ENCODE measurements at regions of chr20 and their contacts with region 1.

Region 1: DNA sequence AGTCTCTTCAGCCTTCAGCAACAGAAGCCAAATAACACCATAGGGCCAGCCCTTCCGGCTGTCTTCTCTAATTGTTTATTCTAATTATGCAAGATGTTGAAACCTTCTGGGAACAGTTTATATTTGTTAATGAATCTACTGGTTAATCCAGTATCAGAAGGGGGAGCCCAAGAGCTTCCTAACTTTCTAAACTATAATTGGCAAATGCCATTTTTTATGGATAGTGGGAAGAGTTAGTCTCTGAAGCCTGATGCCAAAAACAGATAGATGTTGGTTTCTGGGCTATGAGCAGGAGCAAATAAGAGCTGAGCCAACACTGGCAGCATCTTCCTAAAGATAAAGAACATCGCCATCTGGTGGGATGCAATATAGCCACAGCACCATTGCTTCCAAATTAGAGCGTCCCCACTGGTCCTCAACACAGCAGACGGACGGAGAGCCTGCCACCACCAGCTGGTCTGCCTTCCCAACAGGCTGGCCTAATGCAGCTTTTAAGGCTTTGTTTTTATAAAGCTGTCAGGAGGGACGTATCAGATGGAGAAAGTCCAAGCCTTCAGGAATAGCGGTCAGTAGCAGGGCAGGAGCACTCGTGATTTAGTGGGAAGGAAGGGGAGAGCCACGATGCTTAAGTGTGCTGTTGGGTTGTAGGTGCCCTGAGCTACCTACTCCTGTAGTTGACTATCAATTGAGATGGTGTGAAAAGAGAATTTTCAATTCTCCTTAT is 118.8 kb downstream of the RALGAPA2 start:
- DNase-seq: no peak
- H3K4me3 ChIP-seq: no peak overlapping the region
- CTCF ChIP-seq: peak; percentile 47

Region 2: GRCh38 chr20:20083807-20084206 is 509.8 kb before region 1 on chr20:
- CTCF ChIA-PET with region 1: interaction called, 67 read pairs
- POLR2A ChIA-PET with region 1: no interaction called
- DNase-seq: no peak
- H3K4me3 ChIP-seq: no peak overlapping the region
- CTCF ChIP-seq: no peak

Region 3: DNA sequence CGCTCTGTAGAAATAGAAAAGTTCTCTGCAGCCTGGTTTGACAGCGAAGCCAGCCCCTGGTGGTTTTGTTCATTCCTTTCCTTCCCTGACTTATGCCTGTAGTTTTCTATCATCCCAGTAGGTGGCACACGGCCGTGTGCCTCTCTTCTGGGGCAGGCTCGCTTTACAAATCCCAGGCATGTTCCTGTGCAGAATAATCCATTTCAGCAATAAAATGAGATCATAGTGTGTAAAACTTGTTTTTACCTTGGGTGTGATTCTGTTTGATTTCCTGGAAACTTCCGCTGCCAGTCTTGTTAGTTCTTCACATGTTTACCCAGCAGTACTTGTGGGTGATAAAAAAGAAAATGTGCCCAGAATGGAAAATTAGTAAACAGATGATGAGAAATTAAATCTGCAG is 233.1 kb before region 1 on chr20:
- CTCF ChIA-PET with region 1: interaction called, 28 read pairs
- POLR2A ChIA-PET with region 1: no interaction called
- DNase-seq: peak; percentile 17
- H3K4me3 ChIP-seq: no peak overlapping the region
- CTCF ChIP-seq: peak; percentile 76

Region 4: GRCh38 chr20:20568604-20569205 is 24.9 kb before region 1 on chr20:
- CTCF ChIA-PET with region 1: interaction called, 16 read pairs
- POLR2A ChIA-PET with region 1: no interaction called
- DNase-seq: peak; percentile 7
- H3K4me3 ChIP-seq: no peak overlapping the region
- CTCF ChIP-seq: peak; percentile 62

Region 5: GRCh38 chr20:20582734-20583133 is 10.9 kb before region 1 on chr20:
- CTCF ChIA-PET with region 1: interaction called, 32 read pairs
- POLR2A ChIA-PET with region 1: no interaction called
- DNase-seq: no peak
- H3K4me3 ChIP-seq: no peak overlapping the region
- CTCF ChIP-seq: no peak

Region 6: GRCh38 chr20:20609522-20609921 is 15.9 kb after region 1 on chr20:
- CTCF ChIA-PET with region 1: interaction called, 43 read pairs
- POLR2A ChIA-PET with region 1: no interaction called
- DNase-seq: no peak
- H3K4me3 ChIP-seq: no peak overlapping the region
- CTCF ChIP-seq: no peak

Region 7: GRCh38 chr20:21640561-21641182 is 1047.1 kb after region 1 on chr20:
- CTCF ChIA-PET with region 1: no interaction called
- POLR2A ChIA-PET with region 1: no interaction called
- DNase-seq: no peak
- H3K4me3 ChIP-seq: no peak overlapping the region
- CTCF ChIP-seq: no peak